ENCODE measurements at regions of chr7 and their contacts with region 1.

Region 1: DNA sequence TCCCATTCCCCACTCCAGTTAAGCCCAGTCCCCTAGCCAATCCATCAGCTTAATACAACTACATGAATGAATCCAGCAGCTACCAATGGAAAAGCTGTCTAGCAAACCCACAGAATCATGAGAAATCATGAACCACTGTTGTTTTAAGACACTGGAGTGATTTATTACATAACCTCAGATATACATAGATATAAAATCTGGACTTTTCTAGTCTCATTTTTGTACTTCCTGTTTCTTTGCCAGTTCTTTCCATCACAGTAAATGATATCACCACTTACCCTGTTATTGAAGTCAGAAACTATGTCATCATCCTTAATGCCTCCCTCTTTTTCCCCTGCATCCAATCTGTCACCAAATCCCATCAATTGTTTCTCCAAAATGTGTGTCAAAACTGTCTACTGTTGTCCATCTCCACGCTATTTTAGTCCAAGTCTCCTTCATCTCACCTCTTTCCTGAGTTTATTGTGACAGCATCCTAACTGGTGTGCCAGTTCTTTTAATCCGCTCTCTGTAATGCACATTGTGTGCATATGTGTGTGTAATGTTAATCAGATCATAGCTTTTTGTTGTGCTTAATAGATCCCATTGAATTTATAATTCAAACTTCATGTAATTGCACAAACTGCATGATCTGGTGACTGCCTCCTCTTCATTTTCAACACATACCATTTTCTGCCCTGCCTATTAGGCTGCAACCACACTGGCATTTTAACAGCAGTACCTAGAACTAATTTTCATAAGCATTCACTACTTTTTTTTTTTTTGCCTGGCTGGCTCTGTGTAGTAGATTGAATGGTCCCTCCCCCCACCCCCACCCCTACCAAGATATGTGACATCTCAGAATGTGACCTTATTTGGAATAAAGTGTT is 56.0 kb downstream of the MKLN1 start:
- DNase-seq: no peak
- H3K4me3 Mint-ChIP-seq: no peak overlapping the region
- H3K27ac Mint-ChIP-seq: peak overlapping the region; percentile 10
- H3K4me1 Mint-ChIP-seq: peaks cover 38% of the 10 kb centered on the region
- H3K27me3 Mint-ChIP-seq: no peaks in the 10 kb centered on the region

Region 2: DNA sequence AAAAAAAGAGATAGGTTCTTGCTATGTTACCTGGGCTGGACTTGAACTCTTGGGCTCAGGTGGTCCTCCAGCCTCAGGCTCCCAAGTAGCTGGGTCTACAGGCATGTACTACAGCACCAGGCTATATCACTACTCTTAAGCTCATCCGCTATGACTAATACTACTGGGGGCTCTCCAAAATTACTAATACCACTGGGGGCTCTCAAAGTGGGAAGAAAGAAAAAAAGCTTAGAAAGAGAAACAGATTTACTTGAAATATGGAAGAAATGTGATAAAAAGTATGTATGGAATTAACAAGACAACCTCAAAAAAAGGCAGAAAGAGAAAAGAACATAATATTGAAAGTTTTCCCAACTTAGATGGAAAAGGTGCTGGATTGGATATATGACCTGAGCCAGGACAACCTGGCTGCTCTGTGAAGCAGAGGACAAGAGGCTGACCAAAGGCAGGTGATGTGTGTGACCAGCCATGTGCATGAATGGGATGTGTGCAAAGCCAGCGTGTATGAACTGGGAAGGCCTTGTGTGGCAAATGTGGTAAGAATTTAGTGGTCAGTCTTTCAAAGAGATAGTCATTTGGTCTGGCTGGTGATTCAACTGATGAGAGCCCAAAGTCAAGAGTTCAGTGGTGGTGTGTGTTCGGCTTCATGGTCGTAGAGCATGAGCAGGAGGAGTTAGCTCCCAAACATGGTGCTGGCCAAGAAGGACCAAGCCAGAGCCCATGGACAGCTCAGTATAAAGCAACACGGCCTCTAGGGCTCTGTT is 417.2 kb before region 1 on chr7:
- CTCF ChIA-PET with region 1: interaction called, 3 read pairs
- intact Hi-C with region 1: loop called (anchors 5 kb)
- DNase-seq: no peak
- H3K4me3 Mint-ChIP-seq: peak overlapping the region; percentile 1
- H3K27ac Mint-ChIP-seq: peak overlapping the region; percentile 90
- H3K4me1 Mint-ChIP-seq: peaks cover 77% of the 10 kb centered on the region
- H3K27me3 Mint-ChIP-seq: no peaks in the 10 kb centered on the region

Region 3: DNA sequence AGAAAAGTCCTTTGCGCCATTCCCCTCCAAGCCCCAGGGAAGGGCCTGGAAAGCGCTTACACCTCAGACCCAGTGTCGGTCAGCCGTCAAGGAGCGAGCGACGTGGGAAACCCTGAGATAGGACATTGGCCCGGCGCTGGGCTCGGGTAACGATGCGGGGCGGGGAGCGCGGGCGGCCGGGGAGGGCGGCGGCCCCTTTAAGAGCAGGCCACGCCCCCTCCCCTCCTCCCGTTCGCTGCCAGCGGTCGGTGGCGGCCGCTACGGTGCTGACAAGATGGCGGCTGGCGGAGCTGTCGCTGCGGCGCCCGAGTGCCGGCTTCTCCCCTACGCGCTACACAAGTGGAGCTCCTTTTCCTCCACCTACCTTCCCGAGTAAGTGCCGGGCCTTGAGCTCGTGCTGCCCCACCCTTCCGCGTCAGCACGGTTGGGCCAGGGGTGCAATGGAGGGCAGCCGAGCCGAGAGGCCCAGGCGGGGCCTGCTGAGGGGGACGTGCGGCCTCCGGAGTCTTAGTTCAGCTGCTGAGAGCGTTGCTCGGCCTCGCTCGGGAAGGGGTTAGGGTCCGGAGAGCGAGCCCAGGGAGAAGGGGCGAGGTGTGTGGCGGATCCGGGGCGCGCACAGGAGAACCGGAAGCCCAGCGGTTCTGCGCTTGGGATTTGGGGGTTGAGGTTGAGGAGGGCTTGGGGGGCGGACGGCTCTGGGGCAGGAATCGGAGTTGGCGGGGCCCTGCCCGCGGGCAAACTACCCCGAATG is 55.9 kb before region 1 on chr7 and contains the start of gene MKLN1:
- CTCF ChIA-PET with region 1: no interaction called
- intact Hi-C with region 1: loop called (anchors 2 kb)
- DNase-seq: peak; percentile 90
- H3K4me3 Mint-ChIP-seq: peak within 1 kb of the TSS; percentile 98
- H3K27ac Mint-ChIP-seq: peak within 1 kb of the TSS; percentile 96
- H3K4me1 Mint-ChIP-seq: peaks cover 54% of the 10 kb centered on the region
- H3K27me3 Mint-ChIP-seq: no peaks in the 10 kb centered on the region
- total RNA-seq, gene MKLN1: 29.8 to 34.9 TPM

Region 4: GRCh38 chr7:131370523-131370968 is 13.1 kb before region 1 on chr7:
- CTCF ChIA-PET with region 1: no interaction called
- intact Hi-C with region 1: loop called (anchors 1 kb)
- DNase-seq: peak; percentile 15
- H3K4me3 Mint-ChIP-seq: no peak overlapping the region
- H3K27ac Mint-ChIP-seq: no peak overlapping the region
- H3K4me1 Mint-ChIP-seq: peaks cover 66% of the 10 kb centered on the region
- H3K27me3 Mint-ChIP-seq: no peaks in the 10 kb centered on the region